ENCODE measurements at regions of chr16 and their contacts with region 1.

Region 1: DNA sequence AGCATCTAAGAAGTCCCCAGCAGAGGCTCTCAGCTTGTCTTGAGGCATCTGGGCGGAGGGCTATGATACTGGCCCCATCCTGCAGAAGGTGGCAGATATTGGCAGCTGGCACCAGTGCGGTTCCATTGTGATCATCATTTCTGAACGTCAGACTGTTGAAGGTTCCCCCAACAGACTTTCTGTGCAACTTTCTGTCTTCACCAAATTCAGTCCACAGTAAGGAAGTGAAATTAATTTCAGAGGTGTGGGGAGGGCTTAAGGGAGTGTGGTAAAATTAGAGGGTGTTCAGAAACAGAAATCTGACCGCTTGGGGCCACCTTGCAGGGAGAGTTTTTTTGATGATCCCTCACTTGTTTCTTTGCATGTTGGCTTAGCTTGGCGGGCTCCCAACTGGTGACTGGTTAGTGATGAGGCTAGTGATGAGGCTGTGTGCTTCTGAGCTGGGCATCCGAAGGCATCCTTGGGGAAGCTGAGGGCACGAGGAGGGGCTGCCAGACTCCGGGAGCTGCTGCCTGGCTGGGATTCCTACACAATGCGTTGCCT is at the start of gene CIITA:
- DNase-seq: peak; percentile 95 to 99 (median 99)
- H3K4me3 ChIP-seq: peak within 1 kb of the TSS; percentile 36 to 95 (median 84)
- H3K27ac ChIP-seq: peak within 1 kb of the TSS; percentile 56 to 78
- H3K4me1 ChIP-seq: peaks cover 17 to 85% (median 67%) of the 10 kb centered on the region in 4 experiments
- H3K27me3 ChIP-seq: no peaks in the 10 kb centered on the region

Region 2: GRCh38 chr16:10888320-10888937 is 11.6 kb after region 1 on chr16:
- CTCF ChIA-PET with region 1: interaction called, 28 read pairs
- POLR2A ChIA-PET with region 1: interaction called, 3 read pairs
- DNase-seq: no peak
- H3K4me3 ChIP-seq: peak overlapping the region in 3 of 7 experiments; percentile 6 to 46 (median 43)
- H3K27ac ChIP-seq: peak overlapping the region; percentile 42 to 79
- H3K4me1 ChIP-seq: peaks cover 23 to 96% (median 85%) of the 10 kb centered on the region in 4 experiments
- H3K27me3 ChIP-seq: no peaks in the 10 kb centered on the region

Region 3: DNA sequence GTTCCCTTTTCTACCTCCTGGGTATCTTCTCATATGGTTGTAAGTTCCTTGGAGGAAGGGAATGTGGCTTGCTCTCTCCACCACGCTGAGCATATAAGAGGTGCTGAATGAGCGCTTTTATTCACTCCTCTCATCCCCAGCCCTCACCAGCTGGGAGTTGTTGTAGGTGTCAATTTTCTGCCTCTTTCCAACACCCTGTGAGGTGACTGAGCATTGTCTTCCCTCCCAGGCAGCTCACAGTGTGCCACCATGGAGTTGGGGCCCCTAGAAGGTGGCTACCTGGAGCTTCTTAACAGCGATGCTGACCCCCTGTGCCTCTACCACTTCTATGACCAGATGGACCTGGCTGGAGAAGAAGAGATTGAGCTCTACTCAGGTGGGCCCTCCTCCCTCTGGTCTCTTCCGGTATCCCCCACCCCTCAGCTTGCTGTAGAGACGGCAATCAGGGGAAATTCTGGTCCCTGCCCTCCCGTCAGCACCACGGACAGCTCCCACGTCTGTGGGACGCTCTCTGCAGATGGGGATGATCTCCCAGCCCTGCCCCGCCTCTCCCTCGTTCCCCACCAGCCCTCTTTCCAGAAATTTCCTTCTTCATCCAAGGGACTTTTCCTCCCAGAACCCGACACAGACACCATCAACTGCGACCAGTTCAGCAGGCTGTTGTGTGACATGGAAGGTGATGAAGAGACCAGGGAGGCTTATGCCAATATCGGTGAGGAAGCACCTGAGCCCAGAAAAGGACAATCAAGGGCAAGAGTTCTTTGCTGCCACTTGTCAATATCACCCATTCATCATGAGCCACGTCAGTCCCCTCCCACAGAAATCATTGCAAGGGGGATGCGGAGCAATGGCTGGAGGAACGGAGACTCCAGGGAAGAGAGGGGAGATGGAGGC is 18.4 kb after region 1 on chr16:
- CTCF ChIA-PET with region 1: interaction called, 13 read pairs
- POLR2A ChIA-PET with region 1: no interaction called
- DNase-seq: peak in 2 of 3 donors; percentile 40 to 42
- H3K4me3 ChIP-seq: no peak overlapping the region
- H3K27ac ChIP-seq: no peak overlapping the region
- H3K4me1 ChIP-seq: peaks cover 7 to 42% (median 31%) of the 10 kb centered on the region in 4 experiments
- H3K27me3 ChIP-seq: no peaks in the 10 kb centered on the region

Region 4: DNA sequence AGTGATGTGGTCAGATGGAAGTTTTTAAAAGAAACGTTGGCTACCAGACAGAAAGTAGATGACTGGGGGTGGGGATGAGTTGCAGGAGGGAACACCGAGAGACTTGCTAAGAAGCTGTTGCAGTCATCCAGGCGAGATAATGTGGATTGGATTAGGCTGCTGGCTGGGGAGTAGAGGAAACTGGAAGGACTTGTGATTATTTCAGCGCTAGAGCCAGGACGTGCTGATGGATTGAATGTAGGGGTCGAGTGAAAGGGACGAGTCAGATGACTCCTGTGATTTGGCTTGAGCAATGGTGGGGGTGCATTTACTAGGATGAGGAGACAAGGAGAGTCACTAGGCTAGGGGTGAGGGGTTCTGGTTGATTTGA is 156.0 kb after region 1 on chr16:
- CTCF ChIA-PET with region 1: no interaction called
- POLR2A ChIA-PET with region 1: no interaction called
- DNase-seq: no peak
- H3K4me3 ChIP-seq: no peak overlapping the region
- H3K27ac ChIP-seq: no peak overlapping the region
- H3K4me1 ChIP-seq: no peaks in the 10 kb centered on the region
- H3K27me3 ChIP-seq: no peaks in the 10 kb centered on the region